ENCODE measurements at regions of chr17 and their contacts with region 1.

Region 1: GRCh38 chr17:78716814-78717393 is 65.2 kb downstream of the CYTH1 start:
- DNase-seq: no peak

Region 2: GRCh38 chr17:78745407-78746088 is 28.6 kb after region 1 on chr17:
- intact Hi-C with region 1: no loop called
- DNase-seq: no peak

Region 3: DNA sequence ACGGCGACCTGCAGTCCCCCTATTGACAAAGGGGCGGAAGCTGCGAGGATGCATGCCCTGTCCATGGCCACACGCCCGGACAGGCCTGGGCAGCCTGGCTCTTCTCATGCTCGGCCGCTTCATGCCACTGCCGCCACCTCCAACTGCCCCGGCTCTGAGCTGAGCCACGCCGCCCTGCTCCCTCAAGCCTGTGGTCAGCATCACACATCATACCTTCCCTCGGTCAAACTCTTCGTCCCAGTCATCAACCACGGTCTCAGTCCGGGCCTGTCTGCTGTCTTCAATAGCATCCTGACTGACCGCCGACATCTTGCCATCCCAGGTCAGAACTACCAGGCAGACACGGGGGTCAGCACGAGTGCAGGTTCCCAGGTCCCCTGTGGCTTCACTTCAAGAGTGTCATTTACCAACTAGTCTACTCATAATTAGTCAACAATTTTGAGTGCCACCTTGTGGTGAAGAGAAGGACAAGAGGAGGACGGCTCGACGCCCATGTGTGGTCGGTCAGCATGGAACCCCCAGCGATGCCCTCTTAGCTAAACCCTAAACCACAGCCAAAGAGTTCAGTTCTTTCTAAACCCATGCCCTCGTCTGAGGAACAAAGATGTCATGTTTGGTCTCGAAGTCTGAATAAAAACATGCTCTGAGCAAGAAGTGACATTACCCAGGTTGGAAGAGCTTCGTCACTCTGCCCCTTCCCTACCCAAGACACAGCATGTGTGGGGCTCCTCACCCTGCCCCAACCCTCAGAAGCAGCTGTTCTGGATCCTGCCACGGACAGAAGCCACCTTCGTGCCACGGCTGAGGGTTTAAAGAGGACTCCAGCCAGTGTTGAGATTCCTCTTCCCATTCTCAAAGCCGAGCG is 82.0 kb after region 1 on chr17:
- intact Hi-C with region 1: loop called (anchors 5 kb)
- DNase-seq: no peak

Measured in cardiac septum (tissue), 1 donor.